Dendritic cell treated with granulocyte-macrophage colony-stimulating factor and Interleukin-4, amounts not matched to agents 40 ng/mL and 50 ng/mL, for 4 days (primary cell): ENCODE measurements at regions of chr13 and their contacts with region 1.

Region 1: GRCh38 chr13:100588331-100589177 is at the start of gene GGACT:
- H3K4me3 Mint-ChIP-seq: peak within 1 kb of the TSS; percentile 78
- H3K27ac Mint-ChIP-seq: peak within 1 kb of the TSS; percentile 81
- H3K4me1 Mint-ChIP-seq: peaks cover 18% of the 10 kb centered on the region
- H3K27me3 Mint-ChIP-seq: peaks cover 5% of the 10 kb centered on the region

Region 2: DNA sequence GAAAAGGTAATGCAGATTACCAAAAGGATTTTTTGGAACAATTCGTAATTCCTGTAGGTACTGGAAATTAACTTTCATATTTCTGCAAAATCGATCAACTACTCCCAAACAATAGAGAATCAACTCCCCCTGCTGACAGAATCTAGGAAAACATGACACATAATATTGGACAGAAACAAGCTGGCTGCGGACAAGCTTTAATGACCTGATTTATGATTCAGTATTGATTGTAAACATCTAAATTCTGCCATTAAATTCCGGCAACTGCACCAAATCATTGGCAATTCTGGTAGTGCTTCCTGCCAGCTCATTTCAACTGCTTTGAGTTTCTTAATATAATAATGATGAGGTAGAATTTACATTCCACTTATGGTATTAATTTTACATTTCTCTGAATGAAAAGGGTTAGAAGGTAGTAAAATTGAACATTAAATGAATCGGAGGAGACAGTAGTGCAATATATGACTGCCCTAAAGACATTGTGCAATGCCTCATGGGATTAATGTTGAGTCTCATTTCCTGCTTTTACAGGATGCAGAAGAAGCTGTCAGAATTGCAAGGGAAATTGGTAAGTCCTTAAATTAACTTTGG is 353.1 kb before region 1 on chr13:
- intact Hi-C with region 1: no loop called
- H3K4me3 Mint-ChIP-seq: peak overlapping the region; percentile 51
- H3K27ac Mint-ChIP-seq: no peak overlapping the region
- H3K4me1 Mint-ChIP-seq: peaks cover 8% of the 10 kb centered on the region
- H3K27me3 Mint-ChIP-seq: no peaks in the 10 kb centered on the region

Region 3: DNA sequence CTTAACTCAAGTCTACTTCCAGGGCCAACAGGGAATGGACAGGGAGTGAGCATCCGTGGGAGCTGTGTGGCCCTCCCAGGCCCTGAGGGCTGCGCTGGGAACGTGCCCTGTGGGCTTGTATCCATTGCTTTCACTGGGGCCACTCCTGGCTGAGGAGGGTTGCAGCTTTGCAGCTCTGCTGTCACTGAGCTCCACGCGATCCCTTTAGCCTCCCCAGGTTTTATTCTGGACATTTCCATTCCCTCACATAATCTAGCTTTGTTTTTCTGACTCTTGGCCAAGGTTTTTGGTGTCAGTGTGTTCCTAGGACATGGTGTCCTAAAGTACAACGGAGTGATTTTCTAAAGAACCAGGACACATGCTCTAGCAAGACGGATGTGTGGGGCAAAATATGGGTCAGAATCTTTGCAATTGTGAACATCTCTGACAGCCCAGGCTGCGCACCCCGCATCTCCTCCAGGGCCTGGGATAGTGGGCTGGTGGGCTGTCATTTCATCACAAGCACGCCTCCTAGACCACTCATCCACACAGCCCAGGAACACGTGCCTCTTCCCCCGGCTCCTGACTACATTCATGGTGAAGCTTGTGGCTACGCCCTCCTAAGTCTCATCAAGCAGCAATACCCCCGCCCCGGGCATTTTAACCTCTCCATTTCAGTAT is 27.9 kb before region 1 on chr13:
- intact Hi-C with region 1: no loop called
- H3K4me3 Mint-ChIP-seq: no peak overlapping the region
- H3K27ac Mint-ChIP-seq: no peak overlapping the region
- H3K4me1 Mint-ChIP-seq: no peaks in the 10 kb centered on the region
- H3K27me3 Mint-ChIP-seq: no peaks in the 10 kb centered on the region

Region 4: DNA sequence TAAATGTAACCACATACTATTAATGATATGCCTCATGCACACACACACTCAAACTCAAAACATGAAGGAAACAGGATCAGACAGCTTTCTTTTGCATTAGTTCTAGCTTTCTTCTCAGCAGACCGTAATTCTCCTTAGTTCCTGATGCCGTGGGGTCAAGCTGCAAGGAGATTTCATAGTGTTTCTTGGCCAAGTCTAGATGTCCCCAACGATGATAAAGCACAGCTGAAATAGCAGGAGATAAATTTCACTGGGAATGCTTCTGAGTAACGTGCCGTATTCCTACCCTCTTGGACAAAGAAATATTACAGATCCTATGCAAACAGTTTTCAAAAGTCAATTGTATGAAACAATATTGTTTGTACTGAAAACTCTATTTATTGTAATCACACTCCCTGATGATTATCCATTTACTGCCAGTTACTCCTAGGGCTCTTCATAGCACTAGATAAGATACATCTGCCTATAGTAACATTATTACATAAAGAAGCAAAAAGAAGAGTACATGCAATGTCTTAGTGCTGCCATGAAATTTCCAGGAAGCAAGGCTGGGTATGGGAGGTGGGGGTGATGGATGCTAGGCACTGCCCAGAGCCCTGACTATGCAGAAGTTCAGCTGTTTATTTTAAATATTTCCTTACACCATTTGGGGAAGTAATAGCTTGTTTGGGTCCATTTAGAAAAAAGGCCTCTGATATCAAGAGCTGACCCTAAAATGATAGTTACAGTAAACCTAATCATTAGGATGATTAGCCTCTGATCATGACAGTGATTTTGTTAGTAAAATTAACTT is 16.6 kb after region 1 on chr13:
- intact Hi-C with region 1: loop called (anchors 2 kb)
- H3K4me3 Mint-ChIP-seq: no peak overlapping the region
- H3K27ac Mint-ChIP-seq: peak overlapping the region; percentile 69
- H3K4me1 Mint-ChIP-seq: peaks cover 60% of the 10 kb centered on the region
- H3K27me3 Mint-ChIP-seq: no peaks in the 10 kb centered on the region

Region 5: DNA sequence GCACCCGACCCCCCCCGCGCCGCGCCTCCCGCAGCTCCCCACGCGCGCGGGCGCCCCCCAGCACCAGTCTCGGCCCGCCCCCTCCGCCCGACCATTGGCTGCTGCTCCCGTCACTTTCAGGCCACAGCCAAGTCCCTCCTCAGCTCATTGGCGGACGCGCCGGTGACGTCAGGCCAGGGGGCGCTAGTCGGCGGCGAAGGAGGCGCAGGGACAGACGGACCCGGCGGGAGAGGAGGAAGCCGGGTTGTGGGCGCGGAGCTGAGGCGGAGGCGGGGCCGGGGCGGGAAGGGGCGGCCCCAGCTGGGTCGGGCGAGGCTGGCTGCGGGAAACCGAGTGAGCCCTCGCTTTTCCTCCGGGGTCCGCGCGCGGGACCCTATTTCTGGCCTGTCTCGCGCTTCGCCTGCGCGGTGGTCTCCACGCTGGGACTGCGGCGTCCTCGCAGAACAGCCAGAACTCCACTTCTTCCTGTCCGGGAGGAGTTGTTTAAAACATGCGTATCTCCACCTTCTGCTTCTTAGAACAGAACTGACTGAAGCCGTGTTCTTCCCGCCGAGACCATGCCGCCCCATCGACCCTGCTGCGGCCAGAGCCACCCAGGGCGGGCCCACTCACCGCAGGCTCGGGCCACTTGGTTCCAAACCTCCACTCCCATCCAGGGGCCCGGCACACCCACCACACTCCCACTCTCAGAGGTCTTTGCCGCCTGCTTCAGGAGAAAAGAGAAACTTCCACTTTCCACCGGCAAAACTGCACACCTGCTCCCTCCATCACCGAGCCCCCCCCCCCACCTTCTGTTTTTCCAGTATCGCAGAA is 86.5 kb after region 1 on chr13:
- intact Hi-C with region 1: loop called (anchors 2 kb)
- H3K4me3 Mint-ChIP-seq: peak overlapping the region; percentile 87
- H3K27ac Mint-ChIP-seq: peak overlapping the region; percentile 86
- H3K4me1 Mint-ChIP-seq: peaks cover 38% of the 10 kb centered on the region
- H3K27me3 Mint-ChIP-seq: peaks cover 17% of the 10 kb centered on the region